ENCODE measurements at regions of chr9 and their contacts with region 1.

Region 1: GRCh38 chr9:130712564-130713285 is 19.1 kb downstream of the EXOSC2 start:
- DNase-seq: peak; percentile 98 to 99 (median 98)
- H3K4me3 ChIP-seq: peak overlapping the region; percentile 98
- H3K27ac ChIP-seq: peak overlapping the region; percentile 95 to 98
- H3K4me1 ChIP-seq: peaks cover 2% of the 10 kb centered on the region
- H3K27me3 ChIP-seq: no peaks in the 10 kb centered on the region
- CTCF ChIP-seq: peak in 2 of 3 donors; percentile 15 to 16
- EP300 ChIP-seq: no peak
- POLR2A ChIP-seq: peak; percentile 64

Region 2: DNA sequence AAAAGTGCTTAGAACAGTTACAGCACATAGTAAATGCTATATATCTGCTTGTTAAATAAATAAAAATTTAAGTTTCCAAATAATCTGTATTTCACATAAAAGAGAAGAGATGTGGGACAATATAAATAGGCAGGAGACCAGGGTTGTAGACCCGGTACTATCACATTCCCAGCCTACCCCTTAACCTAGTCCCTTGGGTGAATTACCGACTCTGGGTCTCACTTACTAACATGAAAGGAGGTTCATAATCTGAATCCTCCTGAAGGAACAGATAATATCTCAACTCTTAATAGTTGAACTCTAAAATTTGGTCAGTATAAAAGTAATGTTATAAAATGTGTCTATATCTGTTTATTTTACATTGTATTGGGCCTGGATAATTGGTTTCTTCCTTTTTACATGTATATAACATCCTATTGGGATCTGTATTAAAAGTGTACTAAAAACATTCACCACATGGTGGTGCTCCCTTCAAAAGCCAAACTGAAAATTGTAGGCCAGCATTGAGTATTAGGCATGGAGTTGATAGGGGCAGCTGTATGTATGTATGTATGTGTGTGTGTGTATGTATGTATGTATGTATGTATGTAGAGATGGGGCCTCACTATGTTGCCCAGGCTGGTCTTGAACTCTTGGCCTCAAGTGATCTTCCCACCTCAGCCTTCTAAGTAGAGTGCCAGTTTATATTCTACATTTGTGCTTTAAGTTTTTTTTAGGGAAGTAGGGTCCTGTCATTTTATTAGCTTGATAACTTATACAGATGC is 58.1 kb after region 1 on chr9:
- intact Hi-C with region 1: loop called in 3 of 4 experiments (anchors 5 to 10 kb)
- DNase-seq: no peak
- H3K4me3 ChIP-seq: no peak overlapping the region
- H3K27ac ChIP-seq: no peak overlapping the region
- H3K4me1 ChIP-seq: peaks cover 1% of the 10 kb centered on the region
- H3K27me3 ChIP-seq: no peaks in the 10 kb centered on the region
- CTCF ChIP-seq: peak; percentile 57 to 88 (median 77)
- EP300 ChIP-seq: no peak
- POLR2A ChIP-seq: no peak

Measured in ovary (tissue), 10 donors.